Ovary (tissue), 10 donors: ENCODE measurements at regions of chr1 and their contacts with region 1.

Region 1: DNA sequence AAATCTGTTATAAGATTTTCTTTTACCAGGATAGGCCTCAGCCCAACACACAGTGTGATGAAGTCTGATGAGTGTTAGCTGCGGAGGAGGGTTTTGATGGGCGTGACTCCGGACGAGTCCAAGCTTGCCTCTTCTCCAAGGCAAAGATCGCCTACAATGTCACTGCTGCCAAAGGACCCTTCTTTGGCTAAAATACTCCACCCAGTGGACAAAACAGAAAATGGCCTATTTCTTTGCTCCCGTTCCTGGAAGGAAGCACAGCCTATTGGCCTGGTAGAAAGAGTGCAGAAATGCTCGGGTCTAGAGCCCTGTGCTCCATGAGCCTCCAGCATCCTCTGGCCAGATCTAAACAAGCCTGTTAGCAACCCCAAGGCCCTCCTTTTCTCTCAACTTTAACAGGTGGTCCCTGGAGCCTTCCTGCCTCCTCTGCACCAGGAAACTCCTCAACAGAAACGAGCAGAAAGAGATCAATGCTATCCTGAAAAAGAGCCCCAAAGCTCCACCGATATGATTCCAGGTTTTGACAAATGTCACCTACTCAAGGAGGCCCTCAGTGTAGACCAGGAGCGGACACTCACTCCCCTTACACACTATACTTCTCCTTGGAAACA is 3.4 kb upstream of the CASQ2 start:
- DNase-seq: peak; percentile 57 to 76 (median 61)
- H3K4me3 ChIP-seq: no peak overlapping the region
- H3K27ac ChIP-seq: no peak overlapping the region
- H3K4me1 ChIP-seq: no peaks in the 10 kb centered on the region
- H3K27me3 ChIP-seq: no peaks in the 10 kb centered on the region
- CTCF ChIP-seq: peak in 2 of 3 donors; percentile 67 to 72
- EP300 ChIP-seq: no peak
- POLR2A ChIP-seq: no peak

Region 2: DNA sequence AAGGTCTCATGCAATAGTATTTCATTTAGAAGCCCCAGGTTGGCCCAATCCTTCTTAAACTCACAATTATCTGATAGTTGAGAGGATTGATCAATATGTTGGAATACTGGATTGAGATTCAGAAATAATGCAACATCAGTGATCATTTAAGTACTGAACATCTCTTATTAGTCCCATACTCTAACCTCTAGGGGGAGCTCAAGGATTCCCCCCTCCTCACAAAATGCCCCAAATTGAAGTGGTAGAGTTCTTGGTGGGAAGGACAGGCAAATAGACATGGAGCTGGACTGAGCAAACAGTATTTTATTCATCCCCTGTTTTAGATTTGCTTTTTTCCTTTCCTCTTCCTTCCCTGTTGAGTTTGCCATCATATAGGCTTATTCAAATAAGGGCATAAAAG is 496.7 kb before region 1 on chr1:
- intact Hi-C with region 1: loop called in 1 of 4 experiments (anchors 5 kb)
- DNase-seq: no peak
- H3K4me3 ChIP-seq: no peak overlapping the region
- H3K27ac ChIP-seq: no peak overlapping the region
- H3K4me1 ChIP-seq: peaks cover 6% of the 10 kb centered on the region
- H3K27me3 ChIP-seq: no peaks in the 10 kb centered on the region
- CTCF ChIP-seq: no peak
- EP300 ChIP-seq: no peak
- POLR2A ChIP-seq: no peak

Region 3: DNA sequence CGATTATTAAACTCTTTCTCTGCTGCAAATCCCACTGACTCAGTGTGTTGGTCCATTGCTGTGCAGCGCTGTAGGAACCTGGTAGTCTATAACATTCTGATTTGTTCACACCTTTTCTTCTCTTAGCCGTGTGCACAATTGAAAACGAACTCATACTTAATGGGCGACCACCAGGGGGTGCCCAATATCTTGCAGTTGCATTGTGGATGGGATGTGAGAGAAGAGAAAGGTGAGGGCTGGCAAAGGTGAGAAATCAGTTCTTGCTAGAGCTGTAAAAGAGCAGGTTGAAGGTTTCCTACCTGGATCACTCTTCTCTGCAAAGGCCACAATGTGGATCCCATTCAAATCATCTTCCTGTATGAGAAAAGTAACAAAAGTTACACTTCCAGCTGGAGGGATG is 54.4 kb before region 1 on chr1:
- intact Hi-C with region 1: loop called (anchors 5 to 10 kb)
- DNase-seq: peak in 4 of 5 donors; percentile 33 to 57 (median 40)
- H3K4me3 ChIP-seq: no peak overlapping the region
- H3K27ac ChIP-seq: no peak overlapping the region
- H3K4me1 ChIP-seq: no peaks in the 10 kb centered on the region
- H3K27me3 ChIP-seq: no peaks in the 10 kb centered on the region
- CTCF ChIP-seq: peak in 2 of 3 donors; percentile 24 to 32
- EP300 ChIP-seq: no peak
- POLR2A ChIP-seq: no peak